Tibial artery (tissue), 4 donors: ENCODE measurements at regions of chr6 and their contacts with region 1.

Region 1: GRCh38 chr6:17093686-17094085 is 8.2 kb upstream of the STMND1 start:
- DNase-seq: no peak
- H3K4me3 ChIP-seq: no peak overlapping the region
- H3K27ac ChIP-seq: no peak overlapping the region
- H3K4me1 ChIP-seq: no peaks in the 10 kb centered on the region
- H3K27me3 ChIP-seq: no peaks in the 10 kb centered on the region
- CTCF ChIP-seq: no peak

Region 2: DNA sequence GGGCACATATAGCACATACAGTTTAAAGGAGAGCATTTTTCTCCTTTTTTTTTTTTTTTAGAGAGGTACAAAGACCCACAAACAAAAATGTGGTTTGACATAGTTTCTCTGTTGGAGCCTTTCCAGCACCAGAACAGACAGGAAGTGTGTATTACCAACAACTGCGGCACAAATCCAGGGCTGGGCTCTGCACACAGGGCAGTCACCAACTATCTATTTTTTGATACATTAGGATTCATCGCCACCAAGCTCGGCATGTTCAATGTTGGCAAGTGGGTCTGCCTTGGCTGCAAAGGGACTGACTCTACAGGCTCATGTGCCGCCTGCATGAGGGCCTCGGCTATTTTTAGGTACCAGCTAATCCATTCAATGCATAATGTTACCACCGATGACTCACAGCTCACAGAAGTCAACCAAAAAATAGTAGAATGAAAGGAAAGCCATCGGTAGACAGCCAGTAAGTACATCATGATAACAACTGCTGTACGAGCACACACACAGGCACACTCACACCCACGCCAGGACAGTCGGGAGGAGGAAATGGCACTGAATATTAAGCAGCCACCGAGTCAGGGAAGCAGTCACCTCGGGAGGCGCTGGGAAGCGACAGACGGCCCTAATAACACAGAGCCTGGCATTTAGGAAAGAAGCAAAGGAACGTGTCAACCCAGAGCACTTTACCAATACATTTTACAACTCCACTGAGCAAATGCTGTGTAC is 773.7 kb before region 1 on chr6:
- intact Hi-C with region 1: loop called (anchors 10 kb)
- DNase-seq: peak; percentile 87 to 90
- H3K4me3 ChIP-seq: peak overlapping the region; percentile 32 to 39
- H3K27ac ChIP-seq: peak overlapping the region; percentile 92 to 96
- H3K4me1 ChIP-seq: peaks cover 0 to 79% (median 48%) of the 10 kb centered on the region in 4 donors
- H3K27me3 ChIP-seq: no peaks in the 10 kb centered on the region
- CTCF ChIP-seq: no peak

Region 3: DNA sequence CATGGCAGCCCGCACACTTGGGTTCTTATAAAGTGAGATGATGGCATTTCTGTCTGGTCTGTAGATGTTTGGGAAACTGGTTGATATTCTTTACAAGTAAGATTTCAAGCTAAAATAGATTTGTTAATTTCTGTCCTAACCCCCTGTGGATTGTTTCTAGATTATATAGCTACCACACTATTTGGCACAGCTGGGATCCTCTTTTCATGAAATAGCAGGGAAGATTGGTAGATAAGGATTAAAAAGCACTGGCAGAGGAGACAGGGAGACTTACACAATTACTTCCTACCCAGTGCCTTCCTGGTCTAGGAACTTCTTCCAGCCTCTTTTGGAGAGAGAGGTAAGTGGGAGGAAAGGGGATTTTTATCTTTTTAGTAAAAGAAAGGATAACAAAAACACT is 319.2 kb before region 1 on chr6:
- intact Hi-C with region 1: loop called (anchors 1 kb)
- DNase-seq: no peak
- H3K4me3 ChIP-seq: no peak overlapping the region
- H3K27ac ChIP-seq: no peak overlapping the region
- H3K4me1 ChIP-seq: peaks cover 0 to 26% (median 16%) of the 10 kb centered on the region in 4 donors
- H3K27me3 ChIP-seq: no peaks in the 10 kb centered on the region
- CTCF ChIP-seq: no peak

Region 4: DNA sequence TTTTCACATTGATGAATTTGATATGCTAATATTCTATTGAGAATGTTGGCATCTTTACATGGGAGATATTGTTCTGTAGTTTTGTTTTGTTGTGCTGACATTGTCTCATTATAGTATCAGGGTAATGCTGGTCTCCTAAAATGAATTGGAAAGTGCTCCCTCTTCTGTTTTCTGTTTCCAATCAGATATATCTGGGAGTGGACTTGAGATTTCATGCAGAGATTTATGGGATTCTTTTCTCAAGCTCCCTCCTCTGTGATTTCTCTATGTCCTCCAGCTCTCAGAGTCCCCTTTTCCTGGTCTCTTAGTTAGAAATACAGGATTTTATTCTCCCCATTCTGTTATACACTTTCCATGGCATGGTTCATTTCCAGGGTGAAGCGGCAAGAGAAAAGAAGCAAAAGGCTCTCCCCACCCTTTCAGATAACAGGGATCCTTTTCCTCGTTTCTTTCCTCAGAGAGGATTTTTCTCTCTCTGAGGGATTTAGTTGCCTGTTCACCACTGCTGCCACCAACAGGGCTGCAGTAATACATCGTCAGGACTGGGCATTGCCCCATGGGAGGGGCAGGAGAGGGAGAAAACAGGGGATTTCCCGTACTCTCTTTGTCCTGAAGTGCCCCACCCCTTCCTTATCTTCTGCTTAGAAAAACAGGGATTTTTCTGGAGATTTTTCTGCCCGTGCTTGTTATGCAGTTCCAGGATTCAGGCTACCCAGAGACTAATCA is 51.1 kb before region 1 on chr6:
- intact Hi-C with region 1: no loop called
- DNase-seq: no peak
- H3K4me3 ChIP-seq: peak overlapping the region in 1 of 2 donors; percentile 5
- H3K27ac ChIP-seq: no peak overlapping the region
- H3K4me1 ChIP-seq: peaks cover 0 to 24% (median 12%) of the 10 kb centered on the region in 4 donors
- H3K27me3 ChIP-seq: no peaks in the 10 kb centered on the region
- CTCF ChIP-seq: peak; percentile 37 to 40